Right ventricle myocardium inferior (tissue), 1 donor: ENCODE measurements at regions of chr6 and their contacts with region 1.

Region 1: DNA sequence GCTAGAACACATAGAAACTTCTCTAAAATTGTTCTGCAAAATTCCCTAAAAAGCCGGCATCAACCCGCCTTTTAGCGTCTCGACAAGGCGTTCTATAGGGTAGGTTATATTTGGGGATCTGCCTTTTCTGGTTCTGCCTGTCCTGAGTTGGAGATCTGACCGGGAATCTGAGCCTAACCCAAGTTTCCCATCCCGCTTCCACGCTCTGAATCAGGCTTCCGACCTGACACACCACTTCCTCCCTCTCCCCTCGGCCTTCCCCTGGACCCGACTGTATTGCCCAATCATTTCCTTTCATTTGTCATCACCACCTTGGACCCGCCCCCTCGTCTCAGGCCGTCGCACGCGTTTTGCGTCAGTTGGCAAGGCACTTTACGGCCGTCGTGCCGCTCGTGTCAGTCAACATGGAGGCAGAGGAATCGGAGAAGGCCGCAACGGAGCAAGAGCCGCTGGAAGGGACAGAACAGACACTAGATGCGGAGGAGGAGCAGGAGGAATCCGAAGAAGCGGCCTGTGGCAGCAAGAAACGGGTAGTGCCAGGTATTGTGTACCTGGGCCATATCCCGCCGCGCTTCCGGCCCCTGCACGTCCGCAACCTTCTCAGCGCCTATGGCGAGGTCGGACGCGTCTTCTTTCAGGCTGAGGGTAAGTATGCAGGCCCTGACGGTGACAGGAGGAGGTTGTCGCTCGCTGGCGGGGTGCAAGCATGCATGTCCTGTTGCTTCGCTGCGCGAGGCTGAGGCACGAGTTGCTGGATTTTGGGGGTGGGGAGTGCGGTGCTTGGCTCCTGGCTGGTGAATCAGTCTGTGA is at the start of gene ABT1:
- DNase-seq: peak; percentile 98
- ATAC-seq: peak; percentile 98
- total RNA-seq, gene ABT1: 7.6 TPM

Region 2: GRCh38 chr6:26172496-26172958 is 424.3 kb before region 1 on chr6:
- intact Hi-C with region 1: loop called (anchors 2 kb)
- DNase-seq: no peak
- ATAC-seq: peak; percentile 41

Region 3: GRCh38 chr6:26342106-26343004 is 254.4 kb before region 1 on chr6:
- intact Hi-C with region 1: loop called (anchors 1 kb)
- DNase-seq: no peak
- ATAC-seq: no peak